ENCODE measurements at regions of chr6 and their contacts with region 1.

Region 1: DNA sequence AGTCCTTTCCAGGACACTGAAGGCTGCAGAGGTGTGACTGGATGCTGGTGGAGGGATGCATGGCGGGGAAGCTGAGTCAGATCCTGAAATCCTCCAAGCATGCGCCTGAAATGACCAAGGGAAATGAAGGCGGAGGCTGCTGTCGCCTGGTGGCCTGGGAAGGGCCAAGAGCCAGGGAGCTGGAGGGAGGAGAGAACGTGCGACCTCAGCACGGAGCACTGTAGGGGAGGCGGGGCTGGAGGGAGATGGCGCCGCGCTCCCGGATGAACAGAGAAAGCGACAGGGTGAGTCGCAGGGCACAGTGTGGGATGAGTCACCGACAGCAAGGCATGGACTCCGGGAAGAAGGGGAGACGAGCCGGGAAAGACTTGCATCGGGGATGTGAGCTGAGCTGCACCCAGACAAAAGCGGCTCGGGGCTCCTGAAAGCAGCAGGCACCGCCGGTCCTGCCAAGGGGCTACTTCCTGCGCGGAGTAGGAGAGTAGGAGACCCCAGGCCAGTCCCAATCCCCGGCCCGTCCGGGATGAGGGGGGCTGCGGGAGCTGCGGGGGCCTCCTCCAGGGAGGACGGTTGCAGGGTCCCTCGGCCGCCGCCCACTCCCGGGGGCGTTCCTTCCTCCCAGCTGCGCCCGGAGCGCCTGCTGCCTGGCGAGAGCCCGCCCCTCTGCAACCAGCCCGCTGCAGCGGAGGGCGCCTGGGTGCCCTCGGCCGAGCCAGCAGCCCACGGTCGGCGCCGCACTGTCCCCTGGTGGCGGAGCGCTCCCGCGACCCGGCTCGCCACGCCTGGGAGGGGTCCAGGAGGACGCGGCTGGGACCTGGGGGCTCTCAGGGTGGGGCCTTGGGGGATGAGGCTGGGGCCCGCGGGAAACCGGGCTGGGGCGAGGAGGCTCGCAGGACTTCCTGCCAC is 11.0 kb upstream of the NQO2 start:
- DNase-seq: peak; percentile 95
- H3K4me3 ChIP-seq: peak overlapping the region; percentile 69 to 90 (median 86)
- H3K27ac ChIP-seq: peak overlapping the region; percentile 95 to 98 (median 96)
- H3K4me1 ChIP-seq: peaks cover 0 to 33% (median 29%) of the 10 kb centered on the region in 4 donors
- H3K27me3 ChIP-seq: no peaks in the 10 kb centered on the region
- CTCF ChIP-seq: peak; percentile 81 to 97 (median 93)
- EP300 ChIP-seq: peak in 1 of 4 donors; percentile 2
- POLR2A ChIP-seq: peak in 1 of 2 donors; percentile 56

Region 2: GRCh38 chr6:2765166-2765895 is 223.3 kb before region 1 on chr6 and contains the start of gene WRNIP1:
- intact Hi-C with region 1: loop called (anchors 5 kb)
- DNase-seq: peak; percentile 100
- H3K4me3 ChIP-seq: peak within 1 kb of the TSS; percentile 61 to 96 (median 90)
- H3K27ac ChIP-seq: peak within 1 kb of the TSS; percentile 94 to 98 (median 96)
- H3K4me1 ChIP-seq: peaks cover 0 to 48% (median 36%) of the 10 kb centered on the region in 4 donors
- H3K27me3 ChIP-seq: no peaks in the 10 kb centered on the region
- CTCF ChIP-seq: peak in 3 of 4 experiments; percentile 8 to 67 (median 21)
- EP300 ChIP-seq: no peak
- POLR2A ChIP-seq: no peak
- total RNA-seq, gene WRNIP1: 41.0 to 56.6 (median 47.9) TPM

Region 3: GRCh38 chr6:2791124-2791974 is 197.3 kb before region 1 on chr6:
- intact Hi-C with region 1: loop called (anchors 5 kb)
- DNase-seq: peak; percentile 83
- H3K4me3 ChIP-seq: peak overlapping the region in 2 of 4 donors; percentile 4 to 16
- H3K27ac ChIP-seq: peak overlapping the region; percentile 76 to 85 (median 81)
- H3K4me1 ChIP-seq: peaks cover 0 to 40% (median 27%) of the 10 kb centered on the region in 4 donors
- H3K27me3 ChIP-seq: no peaks in the 10 kb centered on the region
- CTCF ChIP-seq: peak; percentile 61 to 82 (median 70)
- EP300 ChIP-seq: no peak
- POLR2A ChIP-seq: no peak

Region 4: DNA sequence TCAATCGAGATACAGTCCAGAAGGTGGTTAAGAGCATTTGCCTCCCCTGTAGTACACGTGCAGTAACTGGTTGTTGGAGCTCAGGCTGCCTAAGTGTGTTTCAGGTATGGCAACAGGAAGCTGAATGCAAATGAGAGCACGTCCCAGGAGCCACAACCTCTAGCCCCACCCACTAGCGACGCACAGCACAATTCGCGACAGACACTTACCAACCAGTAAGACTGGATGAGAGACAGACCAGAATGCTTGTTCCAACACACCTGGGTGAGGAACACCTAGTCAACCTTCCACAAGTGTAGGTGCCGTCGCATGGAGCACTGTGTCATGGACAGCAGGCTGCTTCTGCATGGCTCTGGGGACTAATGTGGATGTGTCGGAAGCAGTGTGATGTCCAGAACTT is 139.8 kb before region 1 on chr6:
- intact Hi-C with region 1: loop called (anchors 2 kb)
- DNase-seq: no peak
- H3K4me3 ChIP-seq: no peak overlapping the region
- H3K27ac ChIP-seq: no peak overlapping the region
- H3K4me1 ChIP-seq: peaks cover 0 to 13% (median 7%) of the 10 kb centered on the region in 4 donors
- H3K27me3 ChIP-seq: no peaks in the 10 kb centered on the region
- CTCF ChIP-seq: no peak
- EP300 ChIP-seq: no peak
- POLR2A ChIP-seq: no peak

Region 5: GRCh38 chr6:2952557-2953095 is 36.1 kb before region 1 on chr6:
- intact Hi-C with region 1: loop called (anchors 1 kb)
- DNase-seq: peak; percentile 93
- H3K4me3 ChIP-seq: peak overlapping the region in 3 of 4 donors; percentile 11 to 17 (median 16)
- H3K27ac ChIP-seq: peak overlapping the region; percentile 73 to 81 (median 78)
- H3K4me1 ChIP-seq: peaks cover 0 to 25% (median 22%) of the 10 kb centered on the region in 4 donors
- H3K27me3 ChIP-seq: no peaks in the 10 kb centered on the region
- CTCF ChIP-seq: peak; percentile 98 to 100 (median 100)
- EP300 ChIP-seq: no peak
- POLR2A ChIP-seq: no peak

Region 6: GRCh38 chr6:2971420-2972218 is 17.1 kb before region 1 on chr6 and contains the start of gene SERPINB6:
- intact Hi-C with region 1: loop called (anchors 1 kb)
- DNase-seq: peak; percentile 95
- H3K4me3 ChIP-seq: peak within 1 kb of the TSS; percentile 68 to 88 (median 84)
- H3K27ac ChIP-seq: peak within 1 kb of the TSS; percentile 98 to 99 (median 98)
- H3K4me1 ChIP-seq: peaks cover 0 to 39% (median 17%) of the 10 kb centered on the region in 4 donors
- H3K27me3 ChIP-seq: no peaks in the 10 kb centered on the region
- CTCF ChIP-seq: no peak
- EP300 ChIP-seq: no peak
- POLR2A ChIP-seq: peak in 1 of 2 donors; percentile 39
- total RNA-seq, gene SERPINB6: 150 to 207 (median 174) TPM

Region 7: DNA sequence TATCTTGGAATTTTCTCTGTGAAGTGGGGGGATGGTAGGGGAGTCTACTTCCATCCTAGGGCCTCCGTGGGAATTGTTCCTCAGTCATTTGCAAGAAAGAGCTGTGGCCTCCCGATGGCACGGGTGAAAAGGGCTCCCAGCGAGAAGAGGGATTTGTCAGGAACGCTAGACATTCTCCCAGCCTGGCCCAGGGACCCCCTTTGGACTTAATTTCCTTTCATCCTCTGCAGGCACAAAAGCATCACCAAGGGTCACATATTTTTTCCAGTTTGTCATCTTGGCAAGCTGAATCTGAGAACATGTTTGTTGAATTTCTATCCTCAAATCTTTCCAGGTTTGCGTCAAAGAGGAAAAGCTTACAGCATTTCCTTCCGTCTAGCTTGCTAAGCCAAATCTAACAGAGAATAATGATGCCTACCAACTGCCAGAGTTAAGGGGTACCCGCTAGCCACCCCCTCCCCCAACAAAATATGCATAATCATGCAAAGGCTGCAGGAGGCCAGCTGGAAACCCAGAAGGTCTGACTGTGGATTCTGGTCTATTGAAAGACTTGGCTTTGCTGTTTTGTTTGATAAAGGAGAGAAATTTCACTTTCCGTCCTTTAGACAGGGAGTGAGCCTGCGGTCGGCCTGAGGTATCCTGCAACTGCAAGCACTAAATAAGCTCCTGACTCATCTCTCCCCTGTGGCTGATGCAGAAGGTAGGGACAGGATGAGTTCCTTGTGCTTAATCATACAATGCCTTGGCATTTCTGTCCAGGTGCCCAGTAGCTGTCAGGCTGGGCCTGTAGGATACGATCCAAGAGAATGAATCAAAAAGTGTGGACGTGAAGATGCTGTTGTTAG is 293.2 kb after region 1 on chr6:
- intact Hi-C with region 1: no loop called
- DNase-seq: peak; percentile 66
- H3K4me3 ChIP-seq: no peak overlapping the region
- H3K27ac ChIP-seq: peak overlapping the region; percentile 38 to 75 (median 71)
- H3K4me1 ChIP-seq: peaks cover 0 to 55% (median 40%) of the 10 kb centered on the region in 4 donors
- H3K27me3 ChIP-seq: no peaks in the 10 kb centered on the region
- CTCF ChIP-seq: no peak
- EP300 ChIP-seq: no peak
- POLR2A ChIP-seq: no peak

Measured in sigmoid colon (tissue), 7 donors.